Activated B cell treated with CpG ODN at 0.5 μM for 24 hours (primary cell): ENCODE measurements at regions of chr9 and their contacts with region 1.

Region 1: DNA sequence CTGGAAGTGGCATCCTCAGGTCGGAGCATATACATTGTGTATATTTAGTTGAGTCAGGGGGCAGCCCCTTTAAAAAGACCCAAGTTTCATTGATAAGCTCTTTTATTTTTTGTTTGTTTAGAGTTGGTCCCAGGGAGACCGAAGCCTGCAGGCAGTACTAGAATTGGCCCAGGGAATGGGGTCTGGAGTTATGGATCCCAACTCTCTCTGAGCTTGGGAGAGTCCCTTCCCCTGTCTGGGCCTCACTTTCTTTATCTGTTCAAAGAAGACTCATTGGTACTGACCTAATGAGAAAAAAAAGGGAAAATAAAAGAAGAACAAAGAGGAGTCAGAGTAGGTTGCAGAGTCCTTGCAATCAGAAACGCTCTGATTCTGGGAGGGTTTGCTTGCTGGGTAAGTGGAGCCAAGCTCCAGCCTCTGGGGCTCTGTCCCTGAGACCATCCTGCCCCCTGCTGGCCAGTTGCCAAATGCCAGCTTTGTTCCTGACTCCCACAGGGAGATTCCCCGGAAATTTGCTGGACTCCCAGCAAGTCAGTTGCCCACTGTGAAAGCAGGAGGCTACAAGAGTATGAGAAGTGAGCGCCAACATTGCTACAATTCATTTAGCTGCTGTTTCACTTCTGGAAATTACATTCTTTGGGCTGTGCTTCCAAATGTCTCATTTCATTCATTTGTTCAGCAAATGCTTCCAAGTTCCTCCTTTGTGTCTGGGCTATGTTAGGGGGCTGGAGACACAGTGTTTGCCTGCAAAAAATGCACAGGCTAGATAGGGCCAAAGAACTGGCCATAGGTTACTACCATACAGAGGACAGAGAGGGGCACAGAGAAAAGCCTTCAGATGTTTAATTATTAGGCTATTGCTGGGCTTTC is 156.2 kb downstream of the MELK start:
- DNase-seq: peak; percentile 55
- ATAC-seq: peak; percentile 70
- H3K4me3 Mint-ChIP-seq: no peak overlapping the region
- H3K27ac Mint-ChIP-seq: peak overlapping the region; percentile 27
- H3K4me1 Mint-ChIP-seq: peaks cover 14% of the 10 kb centered on the region
- H3K27me3 Mint-ChIP-seq: no peaks in the 10 kb centered on the region
- CTCF ChIP-seq: peak; percentile 93

Region 2: DNA sequence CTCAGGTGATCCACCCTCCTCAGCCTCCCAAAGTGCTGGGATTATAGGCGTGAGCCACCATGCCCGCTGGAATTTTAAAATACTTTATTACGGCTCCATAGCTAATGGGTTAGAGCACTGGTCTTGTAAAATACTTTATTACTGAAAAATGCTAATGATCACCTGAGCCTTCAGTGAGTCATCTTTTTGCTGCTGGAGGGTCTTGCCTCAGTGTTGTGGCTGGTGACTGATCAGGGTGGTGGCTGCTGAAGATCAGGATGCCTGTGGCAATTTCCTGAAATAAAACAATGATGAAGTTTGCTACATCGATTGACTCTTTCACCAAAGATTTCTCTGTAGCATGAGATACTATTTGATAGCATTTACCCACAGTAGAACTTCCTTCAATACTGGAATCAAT is 444.7 kb before region 1 on chr9:
- CTCF ChIA-PET with region 1: no interaction called
- POLR2A ChIA-PET with region 1: no interaction called
- intact Hi-C with region 1: no loop called
- DNase-seq: no peak
- ATAC-seq: no peak
- H3K4me3 Mint-ChIP-seq: no peak overlapping the region
- H3K27ac Mint-ChIP-seq: no peak overlapping the region
- H3K4me1 Mint-ChIP-seq: no peaks in the 10 kb centered on the region
- H3K27me3 Mint-ChIP-seq: no peaks in the 10 kb centered on the region
- CTCF ChIP-seq: no peak

Region 3: DNA sequence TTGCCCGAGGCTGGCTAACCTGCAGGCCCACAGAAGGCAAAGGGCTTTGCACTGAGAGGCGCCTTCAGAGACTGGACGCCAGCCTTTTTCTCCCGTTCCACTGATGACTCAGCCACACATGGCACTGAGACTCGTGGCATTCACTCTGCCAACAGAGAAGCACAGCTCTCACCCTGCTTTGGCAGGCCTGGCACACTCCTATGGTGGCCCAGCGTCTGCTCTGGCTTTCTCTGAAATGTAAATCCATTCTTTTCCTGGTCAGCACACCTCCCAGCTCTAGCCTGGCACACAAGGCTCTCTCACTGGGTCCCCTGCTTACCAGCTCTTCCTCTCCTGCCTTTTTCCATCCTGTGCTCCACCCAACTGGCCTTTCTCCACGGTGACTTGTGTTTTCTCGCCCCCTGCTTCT is 162.1 kb before region 1 on chr9:
- CTCF ChIA-PET with region 1: no interaction called
- POLR2A ChIA-PET with region 1: no interaction called
- intact Hi-C with region 1: no loop called
- DNase-seq: no peak
- ATAC-seq: no peak
- H3K4me3 Mint-ChIP-seq: no peak overlapping the region
- H3K27ac Mint-ChIP-seq: no peak overlapping the region
- H3K4me1 Mint-ChIP-seq: no peaks in the 10 kb centered on the region
- H3K27me3 Mint-ChIP-seq: no peaks in the 10 kb centered on the region
- CTCF ChIP-seq: no peak

Region 4: DNA sequence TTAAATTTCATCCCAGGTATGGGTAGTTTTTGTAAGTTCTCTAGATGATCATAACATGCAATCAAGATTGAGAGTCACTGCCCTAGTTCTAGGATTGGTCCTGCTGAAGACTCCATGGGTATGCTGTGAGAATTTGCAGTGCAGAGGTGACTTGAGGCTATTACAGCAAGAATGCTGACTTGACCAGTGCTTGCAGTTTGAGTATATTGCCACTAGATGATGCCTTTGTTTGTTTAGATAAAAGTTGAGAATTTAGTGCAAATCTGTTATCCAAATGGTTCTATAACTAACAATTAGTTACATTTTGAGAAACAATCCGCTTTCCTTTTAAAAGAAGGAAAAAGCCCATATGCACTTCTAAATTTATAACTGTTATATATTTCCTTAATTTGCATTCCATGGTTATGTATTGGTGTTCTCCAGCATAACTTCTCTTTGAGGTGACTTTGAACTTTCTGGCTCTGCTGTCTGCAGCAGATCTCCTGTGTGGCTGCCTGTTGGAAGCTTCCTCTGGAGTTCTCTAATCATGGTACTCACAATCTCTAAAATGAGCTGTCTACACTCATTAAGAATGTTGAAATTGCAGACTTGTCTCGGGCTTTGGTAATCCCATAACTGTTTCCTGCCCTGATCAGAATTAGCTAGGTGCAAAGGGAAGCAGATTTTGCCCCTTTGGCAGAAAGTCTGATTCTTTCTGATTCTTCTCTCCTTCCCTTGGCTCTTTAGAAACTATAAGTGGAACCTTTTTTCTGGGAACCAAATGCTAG is 131.3 kb before region 1 on chr9:
- CTCF ChIA-PET with region 1: interaction called, 10 read pairs
- POLR2A ChIA-PET with region 1: no interaction called
- intact Hi-C with region 1: no loop called
- DNase-seq: no peak
- ATAC-seq: peak; percentile 47
- H3K4me3 Mint-ChIP-seq: no peak overlapping the region
- H3K27ac Mint-ChIP-seq: no peak overlapping the region
- H3K4me1 Mint-ChIP-seq: peaks cover under 1% of the 10 kb centered on the region
- H3K27me3 Mint-ChIP-seq: no peaks in the 10 kb centered on the region
- CTCF ChIP-seq: no peak